ENCODE measurements at regions of chr9 and their contacts with region 1.

Region 1: DNA sequence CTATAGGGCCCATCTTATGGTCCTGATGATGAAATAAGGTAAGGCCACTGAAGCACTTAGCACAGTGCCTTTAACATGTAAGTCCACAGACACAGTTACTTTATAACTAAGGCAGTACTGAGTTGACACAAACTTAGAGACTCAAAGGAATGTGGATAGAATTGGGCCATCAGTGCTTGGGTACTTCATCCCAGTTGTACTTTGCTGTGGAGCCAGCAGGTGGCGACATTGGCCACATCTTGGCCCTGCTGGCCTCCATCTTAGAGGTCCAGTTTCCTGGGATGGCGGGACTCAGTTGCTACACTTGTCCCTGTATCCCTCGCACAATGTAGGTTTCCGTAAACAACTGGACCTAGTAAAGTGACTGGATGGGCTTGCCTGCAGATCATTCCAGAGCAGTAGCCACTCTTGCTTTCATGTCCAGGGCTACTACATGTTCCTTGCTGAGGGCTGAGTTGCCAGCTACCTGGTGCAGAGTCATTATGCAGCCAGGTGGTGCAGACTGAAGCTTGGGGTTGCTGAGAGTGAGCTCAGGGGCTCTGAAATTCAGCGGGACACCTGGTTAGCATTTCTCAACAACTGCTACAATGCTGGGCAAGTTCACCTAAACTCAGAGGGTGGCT is 10.6 kb downstream of the MTAP start:
- DNase-seq: peak; percentile 74
- H3K4me3 Mint-ChIP-seq: no peak overlapping the region
- H3K27ac Mint-ChIP-seq: peak overlapping the region; percentile 17
- H3K4me1 Mint-ChIP-seq: peaks cover 27% of the 10 kb centered on the region
- H3K27me3 Mint-ChIP-seq: no peaks in the 10 kb centered on the region

Region 2: GRCh38 chr9:21802195-21803000 is 10.7 kb before region 1 on chr9 and contains the start of gene MTAP:
- CTCF ChIA-PET with region 1: interaction called, 8 read pairs
- POLR2A ChIA-PET with region 1: interaction called, 10 read pairs
- DNase-seq: peak; percentile 72
- H3K4me3 Mint-ChIP-seq: peak within 1 kb of the TSS; percentile 98
- H3K27ac Mint-ChIP-seq: peak within 1 kb of the TSS; percentile 93
- H3K4me1 Mint-ChIP-seq: peaks cover 46% of the 10 kb centered on the region
- H3K27me3 Mint-ChIP-seq: peaks cover 30% of the 10 kb centered on the region
- total RNA-seq, gene MTAP: 43.4 to 44.9 TPM

Region 3: DNA sequence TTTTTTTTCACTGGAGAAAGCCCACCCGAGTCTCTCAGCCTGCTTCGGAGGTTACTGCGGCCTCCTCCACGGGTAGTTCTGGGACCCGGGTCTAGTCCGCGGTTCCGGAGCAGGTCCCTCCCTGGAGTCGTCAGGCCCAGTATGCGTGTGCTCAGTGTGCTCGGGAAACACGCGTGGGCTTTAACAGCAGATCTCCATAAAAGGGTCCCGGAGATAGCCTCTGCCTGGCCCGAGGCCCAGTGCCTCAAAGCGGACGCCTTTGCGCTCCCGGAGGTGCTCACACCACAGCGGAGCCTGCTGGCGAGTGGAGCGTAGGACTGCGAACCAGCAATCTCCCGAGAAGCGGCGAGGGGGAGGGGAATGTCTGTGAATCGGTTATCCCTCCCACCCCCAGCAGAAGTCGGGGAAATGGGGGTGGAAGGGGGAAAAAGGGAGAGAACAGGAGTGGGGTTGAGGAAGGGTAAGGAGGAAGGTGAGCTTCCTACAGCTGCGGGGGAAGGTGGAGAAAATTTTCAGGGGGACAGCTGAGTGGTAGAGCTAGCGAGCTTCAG is 152.4 kb after region 1 on chr9:
- CTCF ChIA-PET with region 1: interaction called, 11 read pairs
- POLR2A ChIA-PET with region 1: no interaction called
- DNase-seq: peak; percentile 69
- H3K4me3 Mint-ChIP-seq: peak overlapping the region; percentile 59
- H3K27ac Mint-ChIP-seq: peak overlapping the region; percentile 22
- H3K4me1 Mint-ChIP-seq: peaks cover 36% of the 10 kb centered on the region
- H3K27me3 Mint-ChIP-seq: peaks cover 91% of the 10 kb centered on the region

Region 4: DNA sequence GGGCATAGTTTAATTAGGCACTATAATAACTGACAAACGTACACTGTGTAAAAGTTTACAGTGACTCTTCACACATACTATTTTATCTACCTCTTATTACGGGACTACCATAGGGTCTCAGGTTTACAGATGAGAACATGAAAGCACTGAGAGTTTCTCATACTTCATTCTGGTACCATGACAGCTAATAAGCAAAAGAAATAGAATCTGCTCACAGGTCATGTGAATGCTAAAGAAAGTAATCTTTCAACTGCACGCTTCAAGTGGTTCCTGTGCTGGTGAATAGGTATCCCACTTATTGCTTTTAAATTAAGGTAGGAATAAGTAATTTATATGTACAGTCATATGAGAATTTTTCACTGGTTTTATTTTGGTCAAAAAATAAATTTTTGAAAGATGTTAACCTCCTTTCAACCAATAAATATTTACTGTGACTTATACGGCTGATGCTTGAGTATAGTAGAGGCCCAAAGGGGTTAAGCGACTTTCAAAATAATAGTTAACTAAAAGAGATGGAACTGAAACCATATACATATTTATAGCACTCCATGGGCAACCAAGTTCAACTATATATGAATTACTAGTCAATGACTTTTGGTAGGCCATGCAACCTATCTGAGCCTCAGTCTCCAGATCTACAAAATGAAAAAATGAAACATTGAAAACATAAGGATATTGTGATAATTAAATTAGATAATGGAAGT is 173.1 kb after region 1 on chr9:
- CTCF ChIA-PET with region 1: interaction called, 10 read pairs
- POLR2A ChIA-PET with region 1: no interaction called
- DNase-seq: no peak
- H3K4me3 Mint-ChIP-seq: no peak overlapping the region
- H3K27ac Mint-ChIP-seq: no peak overlapping the region
- H3K4me1 Mint-ChIP-seq: peaks cover 15% of the 10 kb centered on the region
- H3K27me3 Mint-ChIP-seq: peaks cover 45% of the 10 kb centered on the region

Region 5: GRCh38 chr9:22037954-22038690 is 225.1 kb after region 1 on chr9:
- CTCF ChIA-PET with region 1: interaction called, 69 read pairs
- POLR2A ChIA-PET with region 1: interaction called, 3 read pairs
- DNase-seq: no peak
- H3K4me3 Mint-ChIP-seq: no peak overlapping the region
- H3K27ac Mint-ChIP-seq: no peak overlapping the region
- H3K4me1 Mint-ChIP-seq: peaks cover 44% of the 10 kb centered on the region
- H3K27me3 Mint-ChIP-seq: peaks cover 21% of the 10 kb centered on the region

Region 6: GRCh38 chr9:22238809-22239684 is 426.0 kb after region 1 on chr9:
- CTCF ChIA-PET with region 1: interaction called, 31 read pairs
- POLR2A ChIA-PET with region 1: no interaction called
- DNase-seq: no peak
- H3K4me3 Mint-ChIP-seq: no peak overlapping the region
- H3K27ac Mint-ChIP-seq: no peak overlapping the region
- H3K4me1 Mint-ChIP-seq: peaks cover 28% of the 10 kb centered on the region
- H3K27me3 Mint-ChIP-seq: peaks cover 41% of the 10 kb centered on the region

Region 7: DNA sequence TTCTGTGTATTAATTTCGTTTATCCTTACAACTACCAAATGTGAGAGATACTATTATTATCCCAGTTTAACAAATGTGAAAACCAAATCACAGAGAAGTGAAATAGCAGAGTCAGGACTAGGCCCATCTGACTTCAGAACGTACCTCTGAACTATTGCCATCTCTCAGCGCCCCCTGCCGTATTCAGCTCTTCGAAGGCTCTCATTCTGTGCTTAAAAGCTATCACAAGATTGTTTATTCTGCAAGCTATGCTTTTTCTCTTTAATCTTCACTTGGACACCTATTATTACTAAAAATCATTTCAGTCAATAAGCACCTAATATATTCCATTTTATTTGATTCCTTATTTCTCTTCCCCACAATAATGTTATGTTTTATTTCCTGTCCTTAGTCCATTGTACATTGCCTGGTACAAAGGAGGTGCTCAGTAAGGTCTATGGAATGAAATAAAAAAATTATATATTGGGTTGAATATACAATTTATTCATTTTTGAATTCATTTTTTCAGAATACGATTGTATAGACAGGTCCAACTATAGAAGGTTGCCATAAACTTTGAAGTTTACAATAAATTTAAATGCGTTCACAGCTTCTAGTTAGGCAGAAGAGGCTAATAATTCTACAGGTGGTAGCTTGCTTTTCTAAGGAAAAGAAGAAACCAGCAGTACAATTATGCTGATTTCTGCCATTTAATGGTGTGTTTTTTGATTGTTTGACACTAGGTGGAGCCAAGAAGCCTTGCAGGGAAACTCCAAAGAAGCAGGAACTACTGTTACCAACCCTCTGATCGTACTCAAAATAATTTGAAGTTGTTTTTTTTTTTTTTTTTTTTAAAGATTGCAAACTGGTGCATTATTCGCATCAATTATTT is 431.3 kb after region 1 on chr9:
- CTCF ChIA-PET with region 1: interaction called, 31 read pairs
- POLR2A ChIA-PET with region 1: no interaction called
- DNase-seq: peak; percentile 42
- H3K4me3 Mint-ChIP-seq: no peak overlapping the region
- H3K27ac Mint-ChIP-seq: no peak overlapping the region
- H3K4me1 Mint-ChIP-seq: peaks cover 19% of the 10 kb centered on the region
- H3K27me3 Mint-ChIP-seq: peaks cover 44% of the 10 kb centered on the region